ENCODE measurements at regions of chr2 and their contacts with region 1.

Region 1: DNA sequence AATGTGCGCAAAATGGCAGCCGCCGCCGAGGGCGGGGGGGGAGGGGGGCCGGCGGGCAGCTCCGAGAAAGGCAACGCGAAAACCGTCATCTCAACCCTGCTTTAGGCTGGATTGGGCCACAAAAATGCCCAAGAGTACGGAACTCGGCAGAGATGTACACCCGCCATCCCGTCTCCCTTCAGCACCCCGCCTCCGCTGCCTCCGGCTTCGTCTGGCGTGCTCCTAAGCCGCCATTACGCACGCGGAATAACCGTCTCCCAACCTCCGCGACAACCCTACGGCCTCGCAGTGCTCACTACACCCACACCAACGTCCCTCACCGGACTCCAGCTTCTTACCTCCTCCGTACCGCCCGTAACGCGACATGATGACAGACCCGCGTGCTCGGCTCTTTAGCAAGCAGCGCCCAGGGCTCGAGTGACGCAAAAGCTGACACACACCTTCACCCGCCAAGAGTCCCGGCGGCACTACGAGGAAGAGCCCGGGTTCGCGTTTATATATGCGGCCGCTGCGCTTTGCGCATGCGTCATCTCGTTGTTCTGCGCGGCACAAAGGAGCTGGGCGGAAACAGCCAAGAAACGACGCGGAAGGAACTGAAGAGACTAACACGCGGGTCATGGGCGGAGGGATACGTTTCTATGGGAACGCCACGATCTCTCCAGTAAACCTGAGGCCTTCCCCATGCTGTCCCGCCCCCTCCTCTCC is at the start of gene SRSF7:
- DNase-seq: peak; percentile 96
- H3K4me3 ChIP-seq: peak within 1 kb of the TSS; percentile 70 to 91 (median 89)
- H3K27ac ChIP-seq: peak within 1 kb of the TSS; percentile 90
- H3K4me1 ChIP-seq: peaks cover 19% of the 10 kb centered on the region
- H3K27me3 ChIP-seq: no peaks in the 10 kb centered on the region
- CTCF ChIP-seq: no peak
- total RNA-seq, gene SRSF7: 72.7 to 183 TPM

Region 2: GRCh38 chr2:38778687-38779082 is 27.6 kb after region 1 on chr2:
- CTCF ChIA-PET with region 1: no interaction called
- dilution Hi-C with region 1: no loop called
- in situ Hi-C with region 1: no loop called
- intact Hi-C with region 1: loop called (anchors 1 kb)
- DNase-seq: no peak
- H3K4me3 ChIP-seq: peak overlapping the region; percentile 60 to 96 (median 87)
- H3K27ac ChIP-seq: peak overlapping the region; percentile 71
- H3K4me1 ChIP-seq: no peaks in the 10 kb centered on the region
- H3K27me3 ChIP-seq: no peaks in the 10 kb centered on the region
- CTCF ChIP-seq: no peak

Region 3: GRCh38 chr2:38912619-38913018 is 161.6 kb after region 1 on chr2:
- CTCF ChIA-PET with region 1: no interaction called
- dilution Hi-C with region 1: no loop called
- in situ Hi-C with region 1: no loop called
- intact Hi-C with region 1: no loop called
- DNase-seq: no peak
- H3K4me3 ChIP-seq: no peak overlapping the region
- H3K27ac ChIP-seq: no peak overlapping the region
- H3K4me1 ChIP-seq: peaks cover 1% of the 10 kb centered on the region
- H3K27me3 ChIP-seq: no peaks in the 10 kb centered on the region
- CTCF ChIP-seq: no peak

Measured in mammary epithelial cell (primary cell).